ENCODE measurements at regions of chr1 and their contacts with region 1.

Region 1: GRCh38 chr1:77126307-77126706 is 92.9 kb downstream of the PIGK start:
- DNase-seq: no peak
- ATAC-seq: no peak

Region 2: DNA sequence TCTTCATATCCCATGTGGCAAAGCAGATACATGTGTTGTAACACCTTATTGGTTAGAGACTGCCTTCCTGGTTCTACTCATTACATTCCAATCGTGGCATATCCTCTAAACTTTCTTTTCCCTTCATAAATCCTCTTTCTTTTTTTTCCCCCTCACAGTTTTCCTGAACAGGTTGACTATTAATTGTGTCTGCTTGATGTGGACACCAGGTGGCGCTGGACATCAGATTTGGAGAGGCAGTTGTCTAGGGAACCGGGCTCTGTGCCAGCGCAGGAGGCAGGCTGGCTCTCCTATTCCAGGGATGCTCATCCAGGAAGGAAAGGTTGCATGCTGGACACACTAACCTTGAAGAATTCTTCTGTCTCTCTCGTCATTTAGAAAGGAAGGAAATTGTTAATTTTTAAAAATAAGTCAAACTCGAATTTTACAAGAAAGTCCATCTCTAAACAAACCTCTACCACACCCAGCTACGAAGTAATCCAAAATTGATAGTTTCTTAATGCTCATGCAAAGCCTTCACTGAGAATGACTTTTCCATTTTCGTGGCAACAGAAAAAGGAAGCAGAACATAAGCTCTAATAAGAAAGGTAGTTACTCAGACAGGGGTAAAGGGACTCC is 1134.7 kb before region 1 on chr1:
- intact Hi-C with region 1: loop called (anchors 10 kb)
- DNase-seq: peak; percentile 92
- ATAC-seq: no peak

Region 3: GRCh38 chr1:76154206-76154956 is 971.9 kb before region 1 on chr1:
- intact Hi-C with region 1: loop called (anchors 5 kb)
- DNase-seq: peak; percentile 88
- ATAC-seq: peak; percentile 88

Region 4: DNA sequence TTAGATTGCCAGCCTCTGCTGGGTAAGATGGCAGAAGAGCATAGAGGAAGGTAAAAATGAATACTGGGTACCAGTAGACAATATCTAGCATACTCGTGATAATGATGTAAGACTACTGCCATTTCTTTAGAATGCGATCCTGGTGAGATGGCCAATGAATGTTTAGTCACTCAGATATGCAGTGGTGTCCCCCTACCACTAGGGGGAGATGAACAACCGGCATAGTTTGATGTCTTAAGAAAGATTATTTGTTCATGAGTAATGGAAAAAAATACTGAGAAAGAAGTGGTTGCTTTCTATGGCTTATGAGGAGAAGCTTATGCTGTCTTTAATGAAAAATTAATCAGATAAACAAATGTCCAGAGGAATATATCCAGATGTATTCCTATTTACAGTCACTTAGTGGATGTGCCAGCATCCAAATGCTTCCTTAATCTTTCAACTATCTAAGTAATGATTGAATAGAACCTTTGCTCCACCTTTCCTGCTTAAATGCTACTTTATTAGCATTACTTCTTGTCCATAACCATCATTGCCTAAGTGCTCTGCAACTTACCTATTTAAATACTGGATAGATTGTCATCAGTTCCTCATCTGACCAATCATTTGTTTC is 795.2 kb before region 1 on chr1:
- intact Hi-C with region 1: loop called (anchors 10 kb)
- DNase-seq: no peak
- ATAC-seq: peak; percentile 42

Region 5: DNA sequence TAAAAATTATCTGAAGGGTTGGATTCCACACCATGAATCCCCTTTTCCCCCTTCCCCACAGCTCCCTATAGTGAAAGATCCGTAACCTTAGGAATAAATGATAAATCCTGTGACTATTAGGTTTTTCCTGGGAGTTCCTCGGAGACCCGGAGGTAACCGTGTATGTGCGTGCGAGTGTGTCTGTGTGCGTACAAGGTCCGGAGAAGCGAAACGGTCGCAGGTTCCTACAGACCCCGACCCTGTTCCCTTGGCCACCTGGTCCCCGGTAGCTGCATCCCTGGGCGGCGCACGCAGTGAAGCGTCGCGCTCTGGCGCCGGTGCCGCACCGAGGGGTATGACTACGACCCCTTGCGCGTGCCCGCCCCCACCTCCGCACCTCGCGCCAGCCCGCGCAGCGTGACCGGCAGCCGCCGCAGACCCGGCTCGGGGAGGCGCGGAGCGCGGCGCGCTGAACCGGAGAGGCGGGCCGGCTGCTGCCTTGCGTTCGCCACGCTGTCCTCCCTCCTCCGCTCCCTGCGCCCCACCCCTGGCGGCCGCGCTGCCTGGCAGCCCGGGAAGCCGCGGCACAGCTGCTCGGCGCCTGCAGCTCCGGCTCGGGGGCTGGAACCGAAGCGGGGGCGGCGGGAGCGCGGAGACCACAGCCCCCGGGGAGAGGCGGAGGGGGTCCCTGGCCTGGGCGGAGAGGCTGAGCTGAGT is 155.3 kb after region 1 on chr1 and contains the start of gene AK5:
- intact Hi-C with region 1: no loop called
- DNase-seq: peak; percentile 68
- ATAC-seq: peak; percentile 72
- total RNA-seq, gene AK5: 0.51 TPM